Naive thymus-derived CD4-positive, alpha-beta T cell (primary cell): ENCODE measurements at regions of chr1 and their contacts with region 1.

Region 1: DNA sequence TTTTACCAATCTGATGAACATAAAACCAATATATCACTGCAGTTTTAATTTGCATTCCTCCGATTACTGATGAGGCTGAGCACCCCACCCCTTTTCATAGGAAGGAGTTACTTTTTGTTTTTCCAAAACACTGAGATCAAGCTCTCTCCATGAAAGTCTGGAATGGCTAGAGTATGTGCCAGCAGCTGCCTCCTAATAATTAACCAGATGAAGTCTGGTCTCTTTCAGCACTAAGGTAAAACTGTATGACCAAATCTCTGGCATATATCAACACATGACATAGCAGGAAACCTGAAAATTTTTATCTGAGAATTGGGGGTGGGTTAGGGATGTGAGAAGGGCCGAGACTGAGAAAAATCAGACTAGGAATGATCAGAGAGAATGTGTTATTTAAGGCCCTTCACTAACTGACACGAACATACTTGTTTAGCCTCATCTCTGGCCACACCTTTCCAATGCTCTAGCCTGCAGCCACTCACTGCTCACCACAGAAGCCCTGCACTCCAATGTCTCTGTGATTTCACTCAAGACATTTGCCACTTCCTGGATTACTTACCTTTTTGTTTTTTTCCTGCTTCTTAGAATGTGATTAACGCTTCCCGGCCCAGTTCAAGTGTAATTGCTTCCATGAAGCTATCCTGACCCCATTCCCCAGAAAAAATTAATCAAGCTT is 34.7 kb downstream of the WASF2 start:
- DNase-seq: peak in 7 of 9 donors; percentile 18 to 44 (median 34)
- ATAC-seq: peak; percentile 75
- H3K4me3 ChIP-seq: peak overlapping the region; percentile 48
- H3K4me3 Mint-ChIP-seq: peak overlapping the region; percentile 58 to 80 (median 69)
- H3K27ac ChIP-seq: peak overlapping the region; percentile 65
- H3K27ac Mint-ChIP-seq: peak overlapping the region; percentile 42 to 92 (median 84)
- H3K4me1 ChIP-seq: peaks cover 18 to 36% of the 10 kb centered on the region in 2 donors
- H3K4me1 Mint-ChIP-seq: peaks cover 36 to 68% (median 63%) of the 10 kb centered on the region in 7 donors
- H3K27me3 ChIP-seq: no peaks in the 10 kb centered on the region
- H3K27me3 Mint-ChIP-seq: no peaks in the 10 kb centered on the region

Region 2: DNA sequence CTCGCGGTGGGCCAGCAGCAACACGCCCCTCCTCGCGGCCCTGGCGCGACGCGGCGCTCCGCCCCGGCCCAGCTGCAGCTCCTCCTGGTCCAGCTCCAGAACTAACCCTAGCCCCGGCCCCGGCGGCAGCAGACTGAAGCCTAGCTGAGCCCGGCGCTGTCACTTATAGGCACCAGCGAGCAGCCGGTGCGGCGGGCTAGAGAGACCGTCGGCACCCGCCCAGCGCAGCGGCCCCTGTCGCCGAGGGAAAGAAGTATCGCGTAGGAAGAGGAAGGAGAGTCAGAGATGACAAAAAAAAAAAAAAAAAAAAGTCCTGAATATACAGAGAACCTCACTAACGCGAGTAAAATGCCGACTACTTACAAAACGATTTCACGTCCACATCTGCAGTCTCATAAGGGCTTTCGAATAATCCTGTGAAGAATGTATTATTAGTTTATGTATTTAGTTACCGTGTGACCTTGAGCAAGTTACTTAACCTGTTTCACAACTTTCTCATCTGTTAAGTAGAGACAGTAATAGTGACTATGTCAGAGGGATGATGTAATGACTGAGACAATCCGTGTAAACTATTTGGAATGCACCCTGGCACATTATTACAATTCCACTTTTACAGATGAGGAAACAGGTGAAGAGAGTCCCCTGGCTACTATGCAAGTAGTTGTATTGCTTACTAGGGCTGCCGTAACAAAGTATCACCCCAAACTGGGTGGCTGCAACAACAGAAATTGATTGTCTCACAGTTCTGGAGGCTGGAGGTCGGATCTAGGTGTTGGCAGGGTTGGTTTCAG is 300.1 kb before region 1 on chr1 and contains the start of gene SLC9A1:
- CTCF ChIA-PET with region 1: no interaction called
- POLR2A ChIA-PET with region 1: no interaction called
- intact Hi-C with region 1: no loop called
- DNase-seq: peak; percentile 90 to 96 (median 94)
- ATAC-seq: peak; percentile 98
- H3K4me3 ChIP-seq: peak within 1 kb of the TSS; percentile 40
- H3K4me3 Mint-ChIP-seq: peak within 1 kb of the TSS; percentile 82 to 97 (median 90)
- H3K27ac ChIP-seq: peak within 1 kb of the TSS; percentile 90
- H3K27ac Mint-ChIP-seq: peak within 1 kb of the TSS; percentile 96 to 100 (median 99)
- H3K4me1 ChIP-seq: peaks cover 29 to 36% of the 10 kb centered on the region in 2 donors
- H3K4me1 Mint-ChIP-seq: peaks cover 38 to 52% (median 49%) of the 10 kb centered on the region in 7 donors
- H3K27me3 ChIP-seq: no peaks in the 10 kb centered on the region
- H3K27me3 Mint-ChIP-seq: no peaks in the 10 kb centered on the region
- total RNA-seq, gene SLC9A1: 13.2 to 25.7 (median 21.1) TPM

Region 3: GRCh38 chr1:27416387-27417111 is 38.7 kb before region 1 on chr1:
- CTCF ChIA-PET with region 1: interaction called, 4 read pairs
- POLR2A ChIA-PET with region 1: interaction called, 3 read pairs
- intact Hi-C with region 1: loop called in 1 of 2 experiments (anchors 1 kb)
- DNase-seq: peak in 7 of 9 donors; percentile 44 to 67 (median 56)
- ATAC-seq: peak; percentile 87
- H3K4me3 ChIP-seq: no peak overlapping the region
- H3K4me3 Mint-ChIP-seq: no peak overlapping the region
- H3K27ac ChIP-seq: peak overlapping the region; percentile 10
- H3K27ac Mint-ChIP-seq: peak overlapping the region; percentile 3 to 85 (median 53)
- H3K4me1 ChIP-seq: peaks cover 0 to 11% of the 10 kb centered on the region in 2 donors
- H3K4me1 Mint-ChIP-seq: peaks cover 12 to 46% (median 35%) of the 10 kb centered on the region in 7 donors
- H3K27me3 ChIP-seq: no peaks in the 10 kb centered on the region
- H3K27me3 Mint-ChIP-seq: no peaks in the 10 kb centered on the region

Region 4: DNA sequence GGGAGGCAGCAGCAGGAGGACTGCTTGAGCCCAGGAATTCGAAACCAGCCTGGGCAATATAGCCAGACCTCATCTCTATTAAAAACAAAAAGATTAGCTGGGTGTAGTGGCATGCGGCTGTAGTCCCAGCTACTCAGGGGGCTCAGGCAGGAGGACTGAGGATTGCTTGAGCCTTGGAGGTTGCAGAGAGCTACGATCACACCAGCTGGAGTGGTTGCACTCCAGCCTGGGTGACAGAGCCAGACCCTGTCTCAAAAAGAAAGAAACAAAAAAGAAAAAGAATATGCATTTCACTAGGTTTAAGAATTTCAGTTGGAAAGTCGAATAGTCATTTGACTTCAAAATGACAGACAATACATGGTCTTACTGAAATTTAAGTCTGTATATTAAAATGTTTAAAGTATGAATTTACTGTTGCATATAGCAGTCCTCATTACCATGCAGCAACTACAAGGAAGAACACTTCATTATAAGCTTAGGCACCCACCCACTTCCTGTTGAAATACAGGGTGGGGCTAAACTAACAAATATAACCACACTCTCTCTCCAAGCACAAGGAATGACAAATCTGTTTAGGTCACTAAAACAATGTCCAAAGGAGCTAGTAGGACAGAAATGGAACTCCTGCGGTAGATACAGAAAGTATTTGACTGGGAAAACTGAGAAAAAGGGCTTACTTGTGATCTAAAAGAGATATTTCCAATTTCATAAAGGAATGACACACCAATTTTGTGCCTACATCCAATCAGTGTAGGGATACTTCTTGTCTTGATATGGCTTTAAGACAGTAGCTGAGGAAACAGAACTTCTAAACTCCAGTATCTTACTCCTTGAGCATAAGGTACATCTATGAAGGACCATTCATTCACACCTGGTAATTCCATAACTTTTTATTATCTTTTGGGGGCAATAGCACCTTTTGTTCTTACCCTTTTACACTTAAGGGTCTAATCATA is 18.8 kb before region 1 on chr1:
- CTCF ChIA-PET with region 1: interaction called, 3 read pairs
- POLR2A ChIA-PET with region 1: interaction called, 7 read pairs
- intact Hi-C with region 1: loop called in 1 of 2 experiments (anchors 2 kb)
- DNase-seq: peak in 7 of 9 donors; percentile 37 to 55 (median 48)
- ATAC-seq: peak; percentile 88
- H3K4me3 ChIP-seq: peak overlapping the region; percentile 5
- H3K4me3 Mint-ChIP-seq: peak overlapping the region; percentile 70 to 89 (median 79)
- H3K27ac ChIP-seq: peak overlapping the region; percentile 68
- H3K27ac Mint-ChIP-seq: peak overlapping the region; percentile 77 to 96 (median 91)
- H3K4me1 ChIP-seq: peaks cover 53 to 75% of the 10 kb centered on the region in 2 donors
- H3K4me1 Mint-ChIP-seq: peaks cover 53 to 87% (median 73%) of the 10 kb centered on the region in 7 donors
- H3K27me3 ChIP-seq: no peaks in the 10 kb centered on the region
- H3K27me3 Mint-ChIP-seq: no peaks in the 10 kb centered on the region

Region 5: GRCh38 chr1:27473755-27474154 is 18.5 kb after region 1 on chr1:
- CTCF ChIA-PET with region 1: no interaction called
- POLR2A ChIA-PET with region 1: interaction called, 4 read pairs
- intact Hi-C with region 1: loop called in 1 of 2 experiments (anchors 2 kb)
- DNase-seq: peak in 4 of 9 donors; percentile 16 to 31 (median 24)
- ATAC-seq: peak; percentile 40
- H3K4me3 ChIP-seq: no peak overlapping the region
- H3K4me3 Mint-ChIP-seq: peak overlapping the region; percentile 5 to 77 (median 58)
- H3K27ac ChIP-seq: no peak overlapping the region
- H3K27ac Mint-ChIP-seq: peak overlapping the region; percentile 10 to 82 (median 66)
- H3K4me1 ChIP-seq: peaks cover 17 to 45% of the 10 kb centered on the region in 2 donors
- H3K4me1 Mint-ChIP-seq: peaks cover 64 to 93% (median 83%) of the 10 kb centered on the region in 7 donors
- H3K27me3 ChIP-seq: no peaks in the 10 kb centered on the region
- H3K27me3 Mint-ChIP-seq: no peaks in the 10 kb centered on the region